CD8-positive, alpha-beta T cell (primary cell): ENCODE measurements at regions of chr3 and their contacts with region 1.

Region 1: DNA sequence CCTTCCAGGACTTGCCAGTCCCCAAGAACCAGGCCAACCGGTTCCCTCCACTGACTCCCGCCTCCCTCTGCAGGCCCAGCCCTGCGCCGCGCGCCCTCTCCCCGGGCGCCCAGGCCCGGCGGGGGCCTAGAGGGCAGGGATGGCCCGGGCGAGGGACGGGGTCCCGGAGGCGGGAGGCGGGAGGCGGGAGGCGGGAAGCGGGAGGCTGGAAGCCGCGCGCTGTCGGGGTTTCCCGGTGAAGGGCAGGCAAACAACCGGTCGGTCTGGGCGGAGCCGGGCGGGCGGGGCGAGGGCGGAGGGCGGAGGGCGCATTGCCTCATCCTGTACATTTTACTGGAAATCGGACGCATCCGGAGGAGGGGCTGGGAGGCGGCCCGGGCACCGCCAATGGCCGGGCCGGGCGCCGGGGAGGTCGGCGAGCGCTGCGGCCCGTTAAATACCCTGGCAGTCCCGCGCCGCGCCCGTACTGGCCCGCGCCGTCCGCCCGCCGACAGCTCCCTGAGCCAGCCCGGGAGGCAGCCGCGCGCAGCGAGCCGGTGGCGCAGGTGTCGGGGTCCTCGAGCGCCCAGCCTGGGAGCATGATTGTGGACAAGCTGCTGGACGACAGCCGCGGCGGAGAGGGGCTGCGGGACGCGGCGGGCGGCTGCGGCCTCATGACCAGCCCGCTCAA is at the start of gene NFKBIZ:
- DNase-seq: peak; percentile 85 to 96 (median 91)
- ATAC-seq: peak; percentile 73
- H3K4me3 ChIP-seq: peak within 1 kb of the TSS; percentile 75 to 92
- H3K4me3 Mint-ChIP-seq: peak within 1 kb of the TSS; percentile 96
- H3K27ac ChIP-seq: peak within 1 kb of the TSS; percentile 94 to 96
- H3K27ac Mint-ChIP-seq: peak within 1 kb of the TSS; percentile 97
- H3K4me1 ChIP-seq: peaks cover 30% of the 10 kb centered on the region
- H3K4me1 Mint-ChIP-seq: peaks cover 39% of the 10 kb centered on the region
- H3K27me3 ChIP-seq: no peaks in the 10 kb centered on the region
- H3K27me3 Mint-ChIP-seq: no peaks in the 10 kb centered on the region
- CTCF ChIP-seq: no peak
- total RNA-seq, gene NFKBIZ: 460 to 477 TPM

Region 2: GRCh38 chr3:101685870-101686412 is 163.2 kb before region 1 on chr3:
- CTCF ChIA-PET with region 1: no interaction called
- POLR2A ChIA-PET with region 1: interaction called, 13 read pairs
- intact Hi-C with region 1: loop called (anchors 2 to 5 kb)
- DNase-seq: no peak
- ATAC-seq: peak; percentile 3
- H3K4me3 ChIP-seq: peak overlapping the region; percentile 89 to 93
- H3K4me3 Mint-ChIP-seq: peak overlapping the region; percentile 100
- H3K27ac ChIP-seq: peak overlapping the region; percentile 94 to 96
- H3K27ac Mint-ChIP-seq: peak overlapping the region; percentile 99
- H3K4me1 ChIP-seq: peaks cover 39% of the 10 kb centered on the region
- H3K4me1 Mint-ChIP-seq: peaks cover 36% of the 10 kb centered on the region
- H3K27me3 ChIP-seq: no peaks in the 10 kb centered on the region
- H3K27me3 Mint-ChIP-seq: no peaks in the 10 kb centered on the region
- CTCF ChIP-seq: no peak

Region 3: DNA sequence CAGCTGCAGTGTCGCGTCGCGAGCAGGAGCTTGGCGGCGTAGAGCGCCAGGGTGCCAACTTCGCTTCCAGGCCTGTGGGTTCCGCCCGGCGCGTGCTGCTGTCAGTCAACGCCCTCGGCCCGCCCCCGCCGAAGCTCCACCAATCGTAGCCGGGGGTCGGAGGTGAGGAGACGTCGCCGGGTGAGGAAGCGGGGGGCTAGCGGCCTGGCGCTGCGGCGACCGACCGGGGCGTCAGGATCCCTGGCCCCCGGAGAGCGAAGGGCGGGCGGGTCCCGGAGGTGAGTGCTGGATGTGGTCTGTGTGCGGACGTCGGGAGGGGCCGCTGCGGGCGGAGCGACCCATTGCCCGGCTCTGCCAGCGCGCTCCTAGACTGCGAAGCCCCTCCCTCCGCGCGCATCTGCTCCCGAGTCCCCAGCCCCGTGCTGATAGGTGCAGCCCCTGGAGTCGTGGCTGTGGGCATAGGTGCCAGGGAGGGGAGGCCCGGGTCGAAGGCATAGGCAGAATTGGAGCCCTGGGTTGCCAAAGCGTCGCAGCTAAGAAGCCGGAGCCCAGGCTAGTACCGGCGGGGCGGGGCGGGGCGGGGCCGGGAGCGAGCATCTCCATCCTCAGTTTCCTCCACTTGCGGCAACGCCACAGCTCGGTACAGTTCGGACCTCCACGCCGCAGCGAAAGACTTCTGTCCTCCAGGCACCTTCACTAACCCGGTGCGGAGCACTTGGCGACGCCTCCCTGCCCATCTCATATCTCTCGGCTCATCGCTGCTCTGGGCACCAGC is 70.0 kb before region 1 on chr3 and contains the start of gene NXPE3:
- CTCF ChIA-PET with region 1: no interaction called
- POLR2A ChIA-PET with region 1: interaction called, 21 read pairs
- intact Hi-C with region 1: loop called in 1 of 2 experiments (anchors 1 kb)
- DNase-seq: peak; percentile 86 to 96 (median 94)
- ATAC-seq: peak; percentile 88
- H3K4me3 ChIP-seq: peak within 1 kb of the TSS; percentile 48 to 92
- H3K4me3 Mint-ChIP-seq: peak within 1 kb of the TSS; percentile 89
- H3K27ac ChIP-seq: peak within 1 kb of the TSS; percentile 77 to 88
- H3K27ac Mint-ChIP-seq: peak within 1 kb of the TSS; percentile 99
- H3K4me1 ChIP-seq: peaks cover 42% of the 10 kb centered on the region
- H3K4me1 Mint-ChIP-seq: peaks cover 57% of the 10 kb centered on the region
- H3K27me3 ChIP-seq: no peaks in the 10 kb centered on the region
- H3K27me3 Mint-ChIP-seq: no peaks in the 10 kb centered on the region
- CTCF ChIP-seq: no peak
- total RNA-seq, gene NXPE3: 39.8 to 40.3 TPM

Region 4: DNA sequence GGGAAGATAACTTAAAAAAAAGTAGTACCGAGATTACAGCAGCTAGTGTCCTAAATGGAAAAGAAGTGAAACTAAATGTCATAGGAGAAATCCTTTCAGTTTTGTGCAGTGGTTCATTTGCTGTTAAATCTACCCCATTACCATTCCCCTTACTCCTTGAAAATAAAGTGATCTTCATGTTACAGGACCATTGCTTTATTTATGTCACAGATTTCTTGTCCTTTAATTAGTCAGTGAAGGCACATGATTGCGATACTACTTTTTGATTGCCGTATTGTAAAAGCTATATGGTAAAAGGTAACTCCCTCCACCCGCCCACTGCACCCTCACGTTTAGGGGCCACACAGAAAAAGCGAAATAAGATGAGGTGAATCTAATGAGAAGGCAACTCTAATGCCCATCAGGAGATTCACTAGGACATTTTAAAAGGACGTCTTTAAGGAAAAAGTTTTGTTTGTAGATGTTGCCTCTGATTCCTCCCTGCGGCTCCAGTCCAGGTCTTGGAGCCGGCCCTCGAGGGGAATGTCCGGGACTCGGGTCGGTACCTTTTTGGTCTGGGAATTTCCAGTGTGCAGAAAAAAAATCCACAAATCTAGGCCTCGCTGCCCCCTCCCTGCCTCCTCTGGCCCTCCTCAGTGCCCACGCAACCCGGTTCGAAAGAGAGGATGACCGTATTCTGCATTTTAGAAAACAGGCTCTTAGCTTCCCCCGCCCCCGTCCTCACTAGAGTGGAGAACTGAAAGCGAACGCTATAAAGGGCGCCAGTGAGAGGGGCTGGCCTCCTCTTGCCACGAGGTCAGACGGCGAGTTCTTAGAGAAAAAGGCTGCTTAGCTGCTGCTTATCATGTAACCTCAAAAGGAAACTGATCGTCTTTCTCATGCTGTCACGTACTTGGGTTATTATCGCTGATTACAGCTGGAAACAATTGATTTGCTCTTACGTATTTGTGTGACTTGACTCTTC is 21.7 kb before region 1 on chr3:
- CTCF ChIA-PET with region 1: interaction called, 4 read pairs
- POLR2A ChIA-PET with region 1: interaction called, 50 read pairs
- intact Hi-C with region 1: loop called (anchors 1 to 2 kb)
- DNase-seq: peak; percentile 54 to 92 (median 79)
- ATAC-seq: peak; percentile 84
- H3K4me3 ChIP-seq: peak overlapping the region; percentile 61 to 65
- H3K4me3 Mint-ChIP-seq: peak overlapping the region; percentile 94
- H3K27ac ChIP-seq: peak overlapping the region; percentile 72 to 90
- H3K27ac Mint-ChIP-seq: peak overlapping the region; percentile 98
- H3K4me1 ChIP-seq: peaks cover 35% of the 10 kb centered on the region
- H3K4me1 Mint-ChIP-seq: peaks cover 61% of the 10 kb centered on the region
- H3K27me3 ChIP-seq: no peaks in the 10 kb centered on the region
- H3K27me3 Mint-ChIP-seq: no peaks in the 10 kb centered on the region
- CTCF ChIP-seq: no peak

Region 5: GRCh38 chr3:101890716-101891115 is 41.5 kb after region 1 on chr3:
- CTCF ChIA-PET with region 1: no interaction called
- POLR2A ChIA-PET with region 1: no interaction called
- intact Hi-C with region 1: no loop called
- DNase-seq: no peak
- ATAC-seq: no peak
- H3K4me3 ChIP-seq: no peak overlapping the region
- H3K4me3 Mint-ChIP-seq: no peak overlapping the region
- H3K27ac ChIP-seq: no peak overlapping the region
- H3K27ac Mint-ChIP-seq: no peak overlapping the region
- H3K4me1 ChIP-seq: no peaks in the 10 kb centered on the region
- H3K4me1 Mint-ChIP-seq: no peaks in the 10 kb centered on the region
- H3K27me3 ChIP-seq: no peaks in the 10 kb centered on the region
- H3K27me3 Mint-ChIP-seq: no peaks in the 10 kb centered on the region
- CTCF ChIP-seq: no peak

Region 6: GRCh38 chr3:101902041-101902440 is 52.9 kb after region 1 on chr3:
- CTCF ChIA-PET with region 1: no interaction called
- POLR2A ChIA-PET with region 1: no interaction called
- intact Hi-C with region 1: no loop called
- DNase-seq: peak in 1 of 9 experiments; percentile 43
- ATAC-seq: peak; percentile 48
- H3K4me3 ChIP-seq: no peak overlapping the region
- H3K4me3 Mint-ChIP-seq: no peak overlapping the region
- H3K27ac ChIP-seq: no peak overlapping the region
- H3K27ac Mint-ChIP-seq: no peak overlapping the region
- H3K4me1 ChIP-seq: no peaks in the 10 kb centered on the region
- H3K4me1 Mint-ChIP-seq: peaks cover 8% of the 10 kb centered on the region
- H3K27me3 ChIP-seq: no peaks in the 10 kb centered on the region
- H3K27me3 Mint-ChIP-seq: no peaks in the 10 kb centered on the region
- CTCF ChIP-seq: no peak

Region 7: DNA sequence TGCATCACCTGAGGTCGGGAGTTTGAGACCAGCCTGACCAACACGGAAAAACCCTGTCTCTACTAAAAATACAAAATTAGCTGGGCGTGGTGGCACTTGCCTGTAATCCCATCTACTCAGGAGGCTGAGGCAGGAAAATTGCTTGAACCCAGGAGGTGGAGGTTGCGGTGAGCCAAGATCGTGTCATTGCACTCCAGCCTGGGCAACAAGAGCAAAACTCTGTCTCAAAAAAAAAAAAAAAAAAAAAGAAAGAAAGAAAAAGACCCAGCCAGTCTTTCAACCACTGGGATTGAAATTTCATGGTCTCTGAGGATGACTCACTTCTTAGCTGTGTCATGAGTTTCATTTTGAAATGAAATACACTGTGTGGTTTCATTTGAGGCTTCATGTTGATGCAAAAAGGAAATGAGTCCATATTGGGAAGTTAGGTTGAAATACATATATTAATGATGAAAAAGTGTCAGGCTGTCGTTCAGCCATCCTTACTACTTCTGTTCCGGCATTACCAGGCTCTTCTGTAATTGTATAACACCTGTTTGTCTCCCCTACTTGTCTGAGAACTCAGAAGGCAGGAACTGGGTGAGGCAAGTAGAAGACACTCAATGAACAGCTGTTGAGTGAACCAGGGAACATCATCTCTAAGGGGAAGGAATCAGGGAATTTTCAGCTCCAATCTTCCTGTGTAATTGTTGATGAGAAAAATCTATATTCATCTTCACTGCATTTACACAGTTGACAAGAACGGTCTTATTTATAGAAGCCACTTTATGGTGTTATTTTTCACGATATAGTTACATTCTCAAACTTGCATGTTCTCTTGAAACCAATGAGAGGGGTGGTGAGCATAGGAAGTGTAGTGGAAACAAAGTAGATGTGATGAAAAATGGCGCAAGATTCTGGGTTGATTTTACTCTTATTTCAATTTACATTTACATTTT is 87.5 kb after region 1 on chr3:
- CTCF ChIA-PET with region 1: no interaction called
- POLR2A ChIA-PET with region 1: no interaction called
- intact Hi-C with region 1: loop called (anchors 2 to 5 kb)
- DNase-seq: peak in 5 of 9 experiments; percentile 8 to 82 (median 31)
- ATAC-seq: peak; percentile 93
- H3K4me3 ChIP-seq: peak overlapping the region in 1 of 2 experiments; percentile 9
- H3K4me3 Mint-ChIP-seq: peak overlapping the region; percentile 45
- H3K27ac ChIP-seq: no peak overlapping the region
- H3K27ac Mint-ChIP-seq: peak overlapping the region; percentile 87
- H3K4me1 ChIP-seq: peaks cover 66% of the 10 kb centered on the region
- H3K4me1 Mint-ChIP-seq: peaks cover 22% of the 10 kb centered on the region
- H3K27me3 ChIP-seq: no peaks in the 10 kb centered on the region
- H3K27me3 Mint-ChIP-seq: no peaks in the 10 kb centered on the region
- CTCF ChIP-seq: no peak

Region 8: GRCh38 chr3:101988591-101988990 is 139.4 kb after region 1 on chr3:
- CTCF ChIA-PET with region 1: no interaction called
- POLR2A ChIA-PET with region 1: no interaction called
- intact Hi-C with region 1: no loop called
- DNase-seq: peak in 1 of 9 experiments; percentile 6
- ATAC-seq: no peak
- H3K4me3 ChIP-seq: no peak overlapping the region
- H3K4me3 Mint-ChIP-seq: no peak overlapping the region
- H3K27ac ChIP-seq: no peak overlapping the region
- H3K27ac Mint-ChIP-seq: no peak overlapping the region
- H3K4me1 ChIP-seq: peaks cover 4% of the 10 kb centered on the region
- H3K4me1 Mint-ChIP-seq: peaks cover 8% of the 10 kb centered on the region
- H3K27me3 ChIP-seq: no peaks in the 10 kb centered on the region
- H3K27me3 Mint-ChIP-seq: no peaks in the 10 kb centered on the region
- CTCF ChIP-seq: no peak

Region 9: DNA sequence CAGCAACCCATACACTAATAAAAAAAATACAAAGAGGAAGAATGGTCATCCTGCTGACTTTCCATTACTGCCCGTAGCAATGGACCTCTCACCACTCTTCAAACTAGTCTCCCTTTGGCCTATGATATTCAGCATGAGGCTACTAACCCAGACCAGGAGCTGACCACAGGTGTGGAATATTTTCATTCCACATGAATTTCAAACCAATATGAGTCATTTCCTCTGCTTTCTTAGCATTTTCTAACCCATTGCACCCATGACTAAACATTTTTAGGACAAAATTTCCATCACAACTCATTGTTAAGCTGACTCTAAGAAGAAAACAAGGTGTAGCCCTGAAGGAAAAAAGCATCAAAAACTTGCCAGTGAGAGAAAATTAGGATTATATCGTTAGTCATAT is 551.6 kb after region 1 on chr3:
- CTCF ChIA-PET with region 1: no interaction called
- POLR2A ChIA-PET with region 1: no interaction called
- intact Hi-C with region 1: no loop called
- DNase-seq: no peak
- ATAC-seq: no peak
- H3K4me3 ChIP-seq: no peak overlapping the region
- H3K4me3 Mint-ChIP-seq: no peak overlapping the region
- H3K27ac ChIP-seq: no peak overlapping the region
- H3K27ac Mint-ChIP-seq: no peak overlapping the region
- H3K4me1 ChIP-seq: no peaks in the 10 kb centered on the region
- H3K4me1 Mint-ChIP-seq: no peaks in the 10 kb centered on the region
- H3K27me3 ChIP-seq: peaks cover 0 to 2% of the 10 kb centered on the region in 2 experiments
- H3K27me3 Mint-ChIP-seq: peaks cover 9% of the 10 kb centered on the region
- CTCF ChIP-seq: no peak